Testis (tissue), 5 donors: ENCODE measurements at regions of chr10 and their contacts with region 1.

Region 1: GRCh38 chr10:111598436-111599059 is 521.7 kb downstream of the ADRA2A start:
- DNase-seq: peak; percentile 82
- H3K4me3 ChIP-seq: no peak overlapping the region
- H3K27ac ChIP-seq: no peak overlapping the region
- H3K4me1 ChIP-seq: no peaks in the 10 kb centered on the region
- H3K27me3 ChIP-seq: no peaks in the 10 kb centered on the region
- CTCF ChIP-seq: peak; percentile 52 to 88 (median 84)
- POLR2A ChIP-seq: no peak

Region 2: GRCh38 chr10:111084366-111085255 is 513.9 kb before region 1 on chr10:
- intact Hi-C with region 1: loop called (anchors 10 kb)
- DNase-seq: no peak
- H3K4me3 ChIP-seq: no peak overlapping the region
- H3K27ac ChIP-seq: no peak overlapping the region
- H3K4me1 ChIP-seq: no peaks in the 10 kb centered on the region
- H3K27me3 ChIP-seq: no peaks in the 10 kb centered on the region
- CTCF ChIP-seq: no peak
- POLR2A ChIP-seq: no peak

Region 3: DNA sequence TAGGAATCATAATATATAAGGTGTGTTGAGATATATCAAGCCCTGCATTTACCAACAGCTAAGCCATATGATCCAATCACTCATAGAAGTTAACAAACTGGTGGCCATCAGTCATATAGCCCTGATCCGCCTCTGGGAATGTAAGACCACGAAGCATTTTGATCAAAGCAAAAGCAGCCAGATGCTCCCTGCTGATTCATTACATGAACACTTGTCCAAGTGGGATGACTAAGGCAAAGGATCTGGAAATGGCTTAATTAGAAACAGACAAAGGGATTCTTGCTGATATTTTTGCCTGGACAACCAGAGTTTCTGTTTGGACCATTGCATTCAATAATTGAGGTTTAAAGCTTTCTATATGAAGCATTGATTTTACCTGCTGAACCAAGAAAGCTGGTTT is 49.5 kb after region 1 on chr10:
- intact Hi-C with region 1: no loop called
- DNase-seq: no peak
- H3K4me3 ChIP-seq: no peak overlapping the region
- H3K27ac ChIP-seq: no peak overlapping the region
- H3K4me1 ChIP-seq: no peaks in the 10 kb centered on the region
- H3K27me3 ChIP-seq: no peaks in the 10 kb centered on the region
- CTCF ChIP-seq: no peak
- POLR2A ChIP-seq: no peak